Motor neuron (in vitro differentiated cells): ENCODE measurements at regions of chr10 and their contacts with region 1.

Region 1: DNA sequence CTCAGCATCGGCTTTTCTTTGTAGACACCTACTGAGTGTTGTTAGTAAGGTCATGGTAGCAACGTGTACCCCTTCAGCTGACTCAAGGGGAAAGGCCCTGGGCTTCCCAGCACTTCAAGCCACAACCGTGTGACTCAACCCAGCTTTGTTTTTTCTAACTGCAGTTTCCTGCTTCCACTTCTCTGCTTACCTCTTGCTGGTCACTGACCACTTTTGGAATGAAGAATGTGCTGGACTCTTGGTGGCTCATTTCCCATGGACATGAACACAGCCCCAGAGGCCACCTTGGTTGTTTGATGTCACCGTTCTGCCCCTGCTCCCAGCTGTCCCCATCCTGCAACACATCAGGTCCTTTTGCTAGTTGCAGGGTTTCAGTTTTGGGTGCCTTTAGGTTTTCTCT is 69.5 kb upstream of the ZNF438 start:
- ATAC-seq: peak in 1 of 8 experiments; percentile 23
- H3K4me3 ChIP-seq: no peak overlapping the region
- H3K27ac ChIP-seq: no peak overlapping the region
- H3K4me1 ChIP-seq: peaks cover 4 to 10% of the 10 kb centered on the region in 2 donors

Region 2: DNA sequence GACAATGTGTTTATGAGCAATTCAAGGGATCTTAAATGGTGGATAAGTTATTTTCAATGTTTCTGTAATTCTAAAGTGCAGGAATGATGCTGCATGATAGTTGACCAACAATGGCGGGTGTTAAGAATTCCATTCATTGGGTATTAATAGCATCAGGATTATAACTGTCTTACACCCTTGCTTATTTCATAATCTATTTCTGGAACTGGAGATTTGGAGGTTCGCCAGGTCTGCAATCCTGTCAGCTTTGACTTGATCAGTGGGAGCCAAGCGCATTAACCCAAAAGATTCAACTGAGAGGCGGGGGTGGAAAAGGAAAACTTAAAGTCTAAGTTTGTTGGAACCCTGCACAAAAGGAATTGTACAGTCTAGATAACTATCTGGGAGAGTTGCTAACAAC is 103.0 kb after region 1 on chr10:
- in situ Hi-C with region 1: loop called in 1 of 9 experiments (anchors 25 kb)
- ATAC-seq: no peak
- H3K4me3 ChIP-seq: no peak overlapping the region
- H3K27ac ChIP-seq: no peak overlapping the region
- H3K4me1 ChIP-seq: no peaks in the 10 kb centered on the region